ENCODE measurements at regions of chr6 and their contacts with region 1.

Region 1: GRCh38 chr6:133923938-133924593 is 29.0 kb upstream of the TBPL1 start:
- DNase-seq: peak; percentile 85
- H3K4me3 Mint-ChIP-seq: no peak overlapping the region
- H3K27ac Mint-ChIP-seq: no peak overlapping the region
- H3K4me1 Mint-ChIP-seq: peaks cover 4% of the 10 kb centered on the region
- H3K27me3 Mint-ChIP-seq: peaks cover 16% of the 10 kb centered on the region
- CTCF ChIP-seq: peak; percentile 77

Region 2: DNA sequence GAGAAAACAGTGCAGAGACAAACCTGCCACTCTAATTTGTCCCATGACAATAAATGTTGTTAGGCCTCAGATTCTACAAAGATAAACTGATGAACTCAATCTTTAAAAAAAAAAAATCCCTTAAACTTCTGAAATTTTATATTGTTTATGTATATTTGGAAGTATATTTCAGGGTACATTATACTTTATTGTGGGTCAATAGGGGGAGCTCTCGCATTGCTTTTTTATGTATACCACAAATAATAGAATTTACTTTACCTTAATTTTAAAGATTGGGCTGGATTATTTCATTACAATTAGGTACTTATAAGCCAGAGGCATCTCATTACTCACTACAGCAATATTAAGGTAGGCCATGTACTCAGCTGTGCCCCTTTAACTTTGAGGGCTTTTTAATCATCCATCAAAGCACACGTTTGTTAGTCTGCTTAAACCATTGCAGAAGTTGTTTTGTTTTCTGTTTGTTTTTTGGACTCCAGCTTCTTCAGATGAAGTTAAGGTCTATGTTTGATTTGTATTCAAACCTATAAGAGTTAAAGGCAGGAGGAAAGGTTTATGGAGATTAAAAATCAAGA is 739.2 kb before region 1 on chr6:
- CTCF ChIA-PET with region 1: interaction called, 5 read pairs
- POLR2A ChIA-PET with region 1: no interaction called
- intact Hi-C with region 1: loop called (anchors 2 kb)
- DNase-seq: peak; percentile 22
- H3K4me3 Mint-ChIP-seq: no peak overlapping the region
- H3K27ac Mint-ChIP-seq: no peak overlapping the region
- H3K4me1 Mint-ChIP-seq: no peaks in the 10 kb centered on the region
- H3K27me3 Mint-ChIP-seq: peaks cover 73% of the 10 kb centered on the region
- CTCF ChIP-seq: peak; percentile 55

Region 3: GRCh38 chr6:133553652-133554051 is 370.4 kb before region 1 on chr6:
- CTCF ChIA-PET with region 1: interaction called, 11 read pairs
- POLR2A ChIA-PET with region 1: no interaction called
- intact Hi-C with region 1: no loop called
- DNase-seq: peak; percentile 70
- H3K4me3 Mint-ChIP-seq: no peak overlapping the region
- H3K27ac Mint-ChIP-seq: no peak overlapping the region
- H3K4me1 Mint-ChIP-seq: peaks cover 12% of the 10 kb centered on the region
- H3K27me3 Mint-ChIP-seq: no peaks in the 10 kb centered on the region
- CTCF ChIP-seq: peak; percentile 61

Region 4: DNA sequence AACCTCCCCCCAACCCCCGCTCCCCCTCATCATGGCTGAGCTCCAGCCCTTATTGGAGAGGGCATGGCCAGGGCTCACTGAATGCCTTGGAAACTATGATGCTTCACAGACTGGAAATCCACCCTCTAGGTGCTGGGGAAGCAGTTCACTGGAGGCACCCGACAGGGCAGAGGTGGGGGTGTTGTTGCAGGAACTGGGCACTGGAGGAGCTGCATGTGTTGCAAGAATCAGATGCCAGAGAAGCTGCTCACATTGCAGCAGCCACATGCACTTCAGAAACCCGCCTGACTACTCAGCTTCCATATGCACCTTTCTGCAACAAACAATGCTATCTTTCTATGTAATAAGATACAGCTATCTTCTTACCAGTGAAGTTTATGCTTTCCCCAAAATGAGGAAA is 21.1 kb after region 1 on chr6:
- CTCF ChIA-PET with region 1: interaction called, 29 read pairs
- POLR2A ChIA-PET with region 1: no interaction called
- intact Hi-C with region 1: no loop called
- DNase-seq: peak; percentile 27
- H3K4me3 Mint-ChIP-seq: no peak overlapping the region
- H3K27ac Mint-ChIP-seq: no peak overlapping the region
- H3K4me1 Mint-ChIP-seq: no peaks in the 10 kb centered on the region
- H3K27me3 Mint-ChIP-seq: no peaks in the 10 kb centered on the region
- CTCF ChIP-seq: no peak

Region 5: GRCh38 chr6:133973109-133973971 is 49.3 kb after region 1 on chr6:
- CTCF ChIA-PET with region 1: interaction called, 44 read pairs
- POLR2A ChIA-PET with region 1: interaction called, 5 read pairs
- intact Hi-C with region 1: loop called (anchors 2 kb)
- DNase-seq: peak; percentile 67
- H3K4me3 Mint-ChIP-seq: no peak overlapping the region
- H3K27ac Mint-ChIP-seq: no peak overlapping the region
- H3K4me1 Mint-ChIP-seq: peaks cover 13% of the 10 kb centered on the region
- H3K27me3 Mint-ChIP-seq: no peaks in the 10 kb centered on the region
- CTCF ChIP-seq: peak; percentile 38

Region 6: GRCh38 chr6:134080171-134080795 is 156.2 kb after region 1 on chr6:
- CTCF ChIA-PET with region 1: interaction called, 51 read pairs
- POLR2A ChIA-PET with region 1: no interaction called
- intact Hi-C with region 1: no loop called
- DNase-seq: peak; percentile 17
- H3K4me3 Mint-ChIP-seq: no peak overlapping the region
- H3K27ac Mint-ChIP-seq: no peak overlapping the region
- H3K4me1 Mint-ChIP-seq: peaks cover 14% of the 10 kb centered on the region
- H3K27me3 Mint-ChIP-seq: no peaks in the 10 kb centered on the region
- CTCF ChIP-seq: no peak

Region 7: DNA sequence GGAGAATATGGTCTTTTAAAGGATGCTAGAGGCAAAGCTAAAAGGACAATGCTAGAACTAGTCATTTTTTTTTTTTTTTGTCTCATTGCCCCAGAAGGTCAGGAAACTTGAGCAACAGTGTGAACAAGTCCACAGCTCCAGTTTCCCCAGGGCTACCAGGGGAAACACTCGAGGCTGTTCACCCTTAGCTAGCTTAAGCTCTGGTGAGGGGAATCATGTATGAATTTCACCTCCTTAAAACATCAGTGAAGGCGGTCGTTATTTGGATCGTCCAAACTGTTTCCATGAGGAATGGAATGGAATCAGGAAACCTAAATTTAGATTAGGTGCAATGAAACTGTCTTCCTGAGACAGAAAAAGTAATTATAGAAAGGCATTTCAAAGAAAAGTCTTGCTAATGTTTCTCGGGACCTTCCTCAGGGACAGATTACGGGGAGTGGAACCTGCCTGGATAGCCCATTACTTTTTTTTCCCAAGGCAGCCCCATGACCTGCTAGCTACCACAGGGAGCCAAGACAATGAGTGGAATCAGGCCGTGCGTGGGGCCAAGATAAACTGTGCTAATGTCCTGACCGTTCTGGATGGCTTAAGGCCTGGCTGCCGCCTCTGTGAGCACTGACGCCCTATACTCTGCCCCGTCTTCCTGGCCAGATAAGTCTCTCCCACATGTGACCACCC is 558.7 kb after region 1 on chr6:
- CTCF ChIA-PET with region 1: no interaction called
- POLR2A ChIA-PET with region 1: no interaction called
- intact Hi-C with region 1: no loop called
- DNase-seq: no peak
- H3K4me3 Mint-ChIP-seq: no peak overlapping the region
- H3K27ac Mint-ChIP-seq: no peak overlapping the region
- H3K4me1 Mint-ChIP-seq: peaks cover 16% of the 10 kb centered on the region
- H3K27me3 Mint-ChIP-seq: no peaks in the 10 kb centered on the region
- CTCF ChIP-seq: no peak

Region 8: GRCh38 chr6:134882426-134883038 is 958.5 kb after region 1 on chr6:
- CTCF ChIA-PET with region 1: no interaction called
- POLR2A ChIA-PET with region 1: no interaction called
- intact Hi-C with region 1: loop called (anchors 5 kb)
- DNase-seq: peak; percentile 82
- H3K4me3 Mint-ChIP-seq: no peak overlapping the region
- H3K27ac Mint-ChIP-seq: no peak overlapping the region
- H3K4me1 Mint-ChIP-seq: peaks cover 16% of the 10 kb centered on the region
- H3K27me3 Mint-ChIP-seq: no peaks in the 10 kb centered on the region
- CTCF ChIP-seq: peak; percentile 94

Region 9: GRCh38 chr6:135162678-135163439 is 1238.8 kb after region 1 on chr6:
- CTCF ChIA-PET with region 1: no interaction called
- POLR2A ChIA-PET with region 1: no interaction called
- intact Hi-C with region 1: no loop called
- DNase-seq: peak; percentile 59
- H3K4me3 Mint-ChIP-seq: no peak overlapping the region
- H3K27ac Mint-ChIP-seq: no peak overlapping the region
- H3K4me1 Mint-ChIP-seq: no peaks in the 10 kb centered on the region
- H3K27me3 Mint-ChIP-seq: no peaks in the 10 kb centered on the region
- CTCF ChIP-seq: peak; percentile 71